Naive thymus-derived CD8-positive, alpha-beta T cell (primary cell): ENCODE measurements at regions of chr2 and their contacts with region 1.

Region 1: GRCh38 chr2:174012347-174013314 is 47.5 kb upstream of the SP3 start:
- DNase-seq: peak in 8 of 10 donors; percentile 4 to 28 (median 17)
- ATAC-seq: peak; percentile 53 to 89
- H3K4me3 Mint-ChIP-seq: peak overlapping the region; percentile 63 to 77 (median 69)
- H3K27ac Mint-ChIP-seq: peak overlapping the region in 5 of 10 donors; percentile 7 to 86 (median 39)
- H3K4me1 Mint-ChIP-seq: peaks cover 2 to 10% (median 6%) of the 10 kb centered on the region in 4 donors
- H3K27me3 Mint-ChIP-seq: peaks cover 4 to 19% (median 11%) of the 10 kb centered on the region in 5 donors

Region 2: DNA sequence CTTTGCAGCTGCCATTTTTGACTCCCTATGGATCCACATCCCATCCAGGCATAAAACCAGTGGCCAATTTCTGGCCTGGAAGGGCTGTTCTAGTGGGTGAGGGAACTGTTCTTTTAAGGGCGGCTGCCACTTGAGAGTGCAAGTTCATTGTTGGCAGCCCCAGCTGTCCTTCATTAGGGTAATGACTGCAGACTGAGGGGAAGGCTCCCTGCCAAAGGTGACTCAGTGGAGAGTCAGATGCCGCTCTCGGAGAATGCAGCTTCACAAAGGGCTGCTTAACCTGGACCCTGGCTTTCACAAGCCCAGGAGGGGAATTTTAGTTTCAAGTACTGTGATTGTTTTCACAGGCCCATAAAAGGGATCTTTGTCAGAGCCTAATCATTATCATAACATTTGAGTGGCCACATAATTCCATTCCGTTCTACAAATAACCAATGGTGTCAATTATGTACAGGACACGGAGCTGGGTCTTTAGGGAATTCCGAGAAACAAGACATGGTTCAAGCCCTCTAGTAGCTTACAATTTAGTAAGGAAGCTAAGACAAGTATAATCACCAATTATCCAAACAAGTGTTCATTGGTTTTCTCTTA is 422.3 kb before region 1 on chr2:
- POLR2A ChIA-PET with region 1: no interaction called
- DNase-seq: no peak
- ATAC-seq: no peak
- H3K4me3 Mint-ChIP-seq: no peak overlapping the region
- H3K27ac Mint-ChIP-seq: no peak overlapping the region
- H3K4me1 Mint-ChIP-seq: no peaks in the 10 kb centered on the region
- H3K27me3 Mint-ChIP-seq: peaks cover 7 to 35% (median 16%) of the 10 kb centered on the region in 5 donors

Region 3: GRCh38 chr2:173793709-173794565 is 218.7 kb before region 1 on chr2:
- POLR2A ChIA-PET with region 1: no interaction called
- DNase-seq: no peak
- ATAC-seq: no peak
- H3K4me3 Mint-ChIP-seq: no peak overlapping the region
- H3K27ac Mint-ChIP-seq: no peak overlapping the region
- H3K4me1 Mint-ChIP-seq: peaks cover 0 to 1% (median 0%) of the 10 kb centered on the region in 4 donors
- H3K27me3 Mint-ChIP-seq: peaks cover 2 to 21% (median 15%) of the 10 kb centered on the region in 5 donors

Region 4: GRCh38 chr2:173965329-173966025 is 47.2 kb before region 1 on chr2 and contains the start of gene SP3:
- POLR2A ChIA-PET with region 1: interaction called, 15 read pairs
- DNase-seq: peak; percentile 90 to 98 (median 94)
- ATAC-seq: peak; percentile 70 to 72
- H3K4me3 Mint-ChIP-seq: peak within 1 kb of the TSS; percentile 84 to 99 (median 97)
- H3K27ac Mint-ChIP-seq: peak within 1 kb of the TSS; percentile 96 to 100 (median 99)
- H3K4me1 Mint-ChIP-seq: peaks cover 16 to 34% (median 28%) of the 10 kb centered on the region in 4 donors
- H3K27me3 Mint-ChIP-seq: no peaks in the 10 kb centered on the region
- polyA plus RNA-seq, gene SP3: 51.4 to 67.9 (median 60.2) TPM

Region 5: GRCh38 chr2:174076040-174076439 is 63.4 kb after region 1 on chr2:
- POLR2A ChIA-PET with region 1: no interaction called
- DNase-seq: no peak
- ATAC-seq: no peak
- H3K4me3 Mint-ChIP-seq: no peak overlapping the region
- H3K27ac Mint-ChIP-seq: no peak overlapping the region
- H3K4me1 Mint-ChIP-seq: peaks cover 0 to 2% (median 0%) of the 10 kb centered on the region in 4 donors
- H3K27me3 Mint-ChIP-seq: no peaks in the 10 kb centered on the region